ENCODE measurements at regions of chr9 and their contacts with region 1.

Region 1: GRCh38 chr9:135098400-135099105 is 11.1 kb downstream of the OLFM1 start:
- DNase-seq: no peak

Region 2: GRCh38 chr9:135410831-135411473 is 312.4 kb after region 1 on chr9:
- in situ Hi-C with region 1: loop called (anchors 5 kb)
- DNase-seq: no peak